ENCODE measurements at regions of chr6 and their contacts with region 1.

Region 1: DNA sequence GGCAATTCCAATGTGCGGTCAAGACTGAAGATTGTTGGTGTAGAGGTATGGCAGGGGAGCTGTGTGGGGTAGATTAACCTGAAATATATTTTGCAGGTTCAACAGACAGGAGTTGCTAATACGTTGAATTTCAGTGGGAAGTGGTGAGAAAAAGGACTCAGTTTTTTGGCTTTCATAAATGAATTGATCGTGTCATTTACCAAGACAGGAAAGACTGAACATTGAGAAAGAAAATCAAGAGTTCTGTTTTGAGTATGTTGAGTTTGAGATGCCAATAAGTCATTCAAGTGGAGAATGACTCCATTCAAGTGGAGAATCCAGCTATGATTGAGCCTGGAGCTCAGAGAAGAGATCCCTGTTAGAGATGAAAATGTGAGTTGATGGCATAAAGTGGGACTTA is 31.1 kb downstream of the NFYA start:
- DNase-seq: no peak
- CTCF ChIP-seq: no peak

Region 2: GRCh38 chr6:41125282-41125681 is 21.4 kb after region 1 on chr6:
- CTCF ChIA-PET with region 1: interaction called, 11 read pairs
- POLR2A ChIA-PET with region 1: no interaction called
- DNase-seq: no peak
- CTCF ChIP-seq: no peak

Region 3: GRCh38 chr6:41298785-41299502 is 195.1 kb after region 1 on chr6:
- CTCF ChIA-PET with region 1: no interaction called
- POLR2A ChIA-PET with region 1: no interaction called
- DNase-seq: no peak
- CTCF ChIP-seq: no peak

Measured in GM10248 (cell line).